ENCODE measurements at regions of chr12 and their contacts with region 1.

Region 1: GRCh38 chr12:120534703-120535655 is 823 bp downstream of the RNF10 start:
- DNase-seq: peak in 1 of 2 donors; percentile 83
- ATAC-seq: peak; percentile 56
- H3K4me3 ChIP-seq: peak overlapping the region; percentile 54 to 93
- H3K27ac ChIP-seq: peak overlapping the region; percentile 28 to 90
- H3K4me1 ChIP-seq: peaks cover 10 to 21% of the 10 kb centered on the region in 2 donors
- H3K27me3 ChIP-seq: no peaks in the 10 kb centered on the region

Region 2: GRCh38 chr12:120495723-120496412 is 39.1 kb before region 1 on chr12 and contains the start of gene DYNLL1:
- intact Hi-C with region 1: loop called (anchors 5 kb)
- DNase-seq: peak; percentile 97 to 98
- ATAC-seq: peak; percentile 99
- H3K4me3 ChIP-seq: peak within 1 kb of the TSS; percentile 77 to 90
- H3K27ac ChIP-seq: peak within 1 kb of the TSS; percentile 31 to 46
- H3K4me1 ChIP-seq: peaks cover 0 to 6% of the 10 kb centered on the region in 2 donors
- H3K27me3 ChIP-seq: no peaks in the 10 kb centered on the region
- total RNA-seq, gene DYNLL1: 236 to 262 TPM

Measured in aorta (tissue), 5 donors.